ENCODE measurements at regions of chr2 and their contacts with region 1.

Region 1: GRCh38 chr2:101860157-101860556 is 131.6 kb upstream of the IL1R2 start:
- H3K4me3 Mint-ChIP-seq: no peak overlapping the region
- H3K27ac Mint-ChIP-seq: no peak overlapping the region
- H3K4me1 Mint-ChIP-seq: peaks cover 12% of the 10 kb centered on the region
- H3K27me3 Mint-ChIP-seq: no peaks in the 10 kb centered on the region

Region 2: DNA sequence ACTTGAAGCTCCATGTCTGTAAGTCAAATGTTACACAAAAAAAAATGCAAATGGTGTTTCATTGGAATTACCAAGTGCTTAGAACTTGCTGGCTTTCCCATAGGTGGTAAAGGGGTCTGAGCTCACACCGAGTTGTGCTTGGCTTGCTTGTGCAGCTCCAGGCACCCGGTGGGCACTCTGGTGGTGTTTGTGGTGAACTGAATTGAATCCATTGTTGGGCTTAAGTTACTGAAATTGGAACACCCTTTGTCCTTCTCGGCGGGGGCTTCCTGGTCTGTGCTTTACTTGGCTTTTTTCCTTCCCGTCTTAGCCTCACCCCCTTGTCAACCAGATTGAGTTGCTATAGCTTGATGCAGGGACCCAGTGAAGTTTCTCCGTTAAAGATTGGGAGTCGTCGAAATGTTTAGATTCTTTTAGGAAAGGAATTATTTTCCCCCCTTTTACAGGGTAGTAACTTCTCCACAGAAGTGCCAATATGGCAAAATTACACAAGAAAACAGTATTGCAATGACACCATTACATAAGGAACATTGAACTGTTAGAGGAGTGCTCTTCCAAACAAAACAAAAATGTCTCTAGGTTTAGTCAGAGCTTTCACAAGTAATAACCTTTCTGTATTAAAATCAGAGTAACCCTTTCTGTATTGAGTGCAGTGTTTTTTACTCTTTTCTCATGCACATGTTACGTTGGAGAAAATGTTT is 33.7 kb after region 1 on chr2:
- intact Hi-C with region 1: no loop called
- H3K4me3 Mint-ChIP-seq: no peak overlapping the region
- H3K27ac Mint-ChIP-seq: no peak overlapping the region
- H3K4me1 Mint-ChIP-seq: peaks cover 32% of the 10 kb centered on the region
- H3K27me3 Mint-ChIP-seq: no peaks in the 10 kb centered on the region

Region 3: GRCh38 chr2:102166189-102166845 is 306.2 kb after region 1 on chr2:
- intact Hi-C with region 1: loop called (anchors 10 kb)
- H3K4me3 Mint-ChIP-seq: no peak overlapping the region
- H3K27ac Mint-ChIP-seq: no peak overlapping the region
- H3K4me1 Mint-ChIP-seq: peaks cover 12% of the 10 kb centered on the region
- H3K27me3 Mint-ChIP-seq: no peaks in the 10 kb centered on the region

Measured in dendritic cell treated with granulocyte-macrophage colony-stimulating factor and Interleukin-4, amounts not matched to agents 40 ng/mL and 50 ng/mL, for 4 days (primary cell).